ENCODE measurements at regions of chr16 and their contacts with region 1.

Region 1: DNA sequence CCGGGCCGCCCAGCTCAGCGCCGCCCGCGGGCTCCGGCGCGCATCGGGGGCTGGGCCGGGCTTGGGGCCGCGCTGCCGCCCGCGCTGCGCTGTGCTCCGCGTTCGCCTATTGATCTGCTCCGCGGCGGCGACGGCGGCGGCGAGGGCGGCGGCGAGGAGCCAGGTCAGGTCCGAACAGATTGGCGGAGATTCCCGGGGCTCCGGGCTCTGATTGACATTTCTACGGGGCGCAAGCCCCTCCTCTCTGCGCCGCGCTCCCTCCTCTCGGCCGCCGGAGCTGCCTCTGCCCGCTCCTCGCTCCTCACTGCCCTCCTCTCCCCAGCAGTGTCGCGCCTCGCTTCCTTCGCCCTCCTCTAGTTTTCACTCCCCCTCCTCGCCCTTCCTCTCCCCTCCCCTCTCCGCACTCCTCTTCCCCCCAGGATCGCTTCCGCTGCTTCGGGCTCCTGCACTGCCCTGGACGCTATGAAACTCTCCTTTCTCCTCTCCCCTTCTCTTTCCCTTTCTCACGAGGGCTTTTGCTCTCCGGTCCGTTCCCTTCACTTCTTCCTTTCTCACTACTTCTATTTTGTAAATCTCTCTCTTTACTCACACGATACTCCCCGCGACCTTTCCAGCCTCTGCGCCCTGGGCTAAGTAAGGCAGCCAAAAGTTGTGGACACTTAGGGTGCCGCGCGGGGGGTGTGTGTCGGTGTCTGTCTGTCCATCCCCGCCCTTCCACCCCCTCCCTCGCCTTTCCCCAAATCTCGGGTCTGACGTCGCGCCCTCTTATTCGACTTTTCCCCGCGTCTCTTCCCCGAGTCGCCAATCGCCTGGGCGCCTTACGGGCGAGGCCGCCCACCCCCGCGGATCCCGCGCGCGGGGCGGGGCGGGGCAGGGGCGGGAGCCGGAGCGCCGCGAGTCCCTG is at the start of gene IRX3:
- DNase-seq: peak; percentile 93
- ATAC-seq: peak; percentile 90
- total RNA-seq, gene IRX3: 38.8 TPM

Region 2: GRCh38 chr16:53773150-53773846 is 513.0 kb before region 1 on chr16:
- intact Hi-C with region 1: loop called (anchors 5 kb)
- DNase-seq: no peak
- ATAC-seq: peak; percentile 76

Region 3: DNA sequence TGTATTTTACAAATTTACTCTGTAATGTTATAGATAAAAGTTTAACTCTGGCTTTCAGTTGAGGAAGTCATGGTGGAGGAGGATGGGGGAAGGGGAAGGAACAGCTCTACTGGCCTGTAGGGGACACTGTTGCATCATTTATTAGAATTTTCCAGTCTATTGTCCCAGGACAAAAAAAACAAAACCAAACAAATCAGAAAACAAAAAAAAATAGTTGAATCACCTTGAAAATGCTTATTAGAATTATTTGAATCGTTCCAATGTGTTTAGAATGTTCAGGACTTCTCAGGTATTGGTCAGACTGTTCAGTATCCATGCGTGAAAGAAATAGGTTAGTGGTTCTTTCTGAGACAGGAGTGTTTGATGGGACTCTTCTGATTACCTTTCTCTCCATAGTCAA is 340.3 kb before region 1 on chr16:
- intact Hi-C with region 1: loop called (anchors 5 kb)
- DNase-seq: no peak
- ATAC-seq: peak; percentile 63

Region 4: DNA sequence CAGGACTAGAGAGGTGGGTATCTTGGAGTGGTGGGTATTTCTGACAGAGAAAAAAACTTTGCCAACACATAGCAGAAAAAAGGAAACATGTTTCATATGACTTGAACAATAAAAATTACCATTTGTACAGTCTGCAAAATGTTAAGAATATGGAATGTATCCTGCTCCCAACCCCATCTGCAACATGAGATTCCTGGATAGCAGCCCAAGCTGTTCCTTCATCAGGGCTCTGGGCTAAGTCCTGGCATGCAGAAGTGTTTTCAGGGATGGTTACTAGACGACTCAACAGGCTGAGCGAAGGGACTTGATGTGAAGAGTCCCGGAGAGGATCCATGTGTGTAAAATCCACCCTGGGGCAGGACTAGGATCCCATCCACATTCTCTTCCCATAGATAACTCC is 121.3 kb after region 1 on chr16:
- intact Hi-C with region 1: loop called (anchors 5 kb)
- DNase-seq: no peak
- ATAC-seq: no peak

Region 5: DNA sequence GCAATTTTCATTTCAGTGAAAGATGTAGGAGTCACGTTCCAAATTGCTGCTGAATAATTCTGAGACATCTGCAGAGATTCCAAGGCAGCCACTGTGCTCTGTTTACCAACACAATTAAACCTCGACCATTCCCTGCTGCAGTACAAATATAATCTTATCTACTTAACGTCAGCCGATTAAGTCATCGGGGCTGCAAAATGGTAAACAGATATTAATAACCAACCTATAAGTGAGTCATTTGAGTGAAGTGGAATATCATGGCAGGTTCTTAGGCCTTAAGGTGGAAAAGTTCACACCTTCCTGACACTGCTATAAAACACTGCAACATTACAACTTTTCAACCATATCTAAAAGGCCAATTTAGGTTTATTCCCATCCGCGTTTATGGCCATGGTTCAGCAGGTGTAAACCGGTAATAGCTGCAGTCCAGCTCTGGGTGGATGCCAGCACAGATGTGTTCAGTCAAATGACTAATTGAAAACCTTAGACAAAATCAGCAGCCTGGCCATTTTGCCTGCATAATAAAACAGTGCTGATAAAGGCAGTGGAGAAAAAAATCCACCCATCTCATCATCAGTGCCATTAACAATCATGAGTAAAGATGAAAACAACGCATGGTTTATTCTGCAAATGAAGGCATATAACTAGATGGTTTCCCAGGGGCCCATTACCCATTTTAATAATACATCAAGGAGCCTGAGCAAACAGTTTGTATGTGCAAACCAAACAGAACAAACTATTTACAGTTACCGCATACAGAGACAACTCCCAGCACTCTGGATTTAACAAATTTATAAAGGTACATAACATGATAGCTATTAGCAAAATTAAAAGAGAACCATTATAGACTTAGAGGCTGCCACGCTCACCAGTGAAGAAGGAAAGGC is 203.1 kb after region 1 on chr16:
- intact Hi-C with region 1: loop called (anchors 5 kb)
- DNase-seq: no peak
- ATAC-seq: peak; percentile 30

Region 6: GRCh38 chr16:54817446-54817845 is 531.1 kb after region 1 on chr16:
- intact Hi-C with region 1: loop called (anchors 5 kb)
- DNase-seq: no peak
- ATAC-seq: peak; percentile 66